ENCODE measurements at regions of chr13 and their contacts with region 1.

Region 1: DNA sequence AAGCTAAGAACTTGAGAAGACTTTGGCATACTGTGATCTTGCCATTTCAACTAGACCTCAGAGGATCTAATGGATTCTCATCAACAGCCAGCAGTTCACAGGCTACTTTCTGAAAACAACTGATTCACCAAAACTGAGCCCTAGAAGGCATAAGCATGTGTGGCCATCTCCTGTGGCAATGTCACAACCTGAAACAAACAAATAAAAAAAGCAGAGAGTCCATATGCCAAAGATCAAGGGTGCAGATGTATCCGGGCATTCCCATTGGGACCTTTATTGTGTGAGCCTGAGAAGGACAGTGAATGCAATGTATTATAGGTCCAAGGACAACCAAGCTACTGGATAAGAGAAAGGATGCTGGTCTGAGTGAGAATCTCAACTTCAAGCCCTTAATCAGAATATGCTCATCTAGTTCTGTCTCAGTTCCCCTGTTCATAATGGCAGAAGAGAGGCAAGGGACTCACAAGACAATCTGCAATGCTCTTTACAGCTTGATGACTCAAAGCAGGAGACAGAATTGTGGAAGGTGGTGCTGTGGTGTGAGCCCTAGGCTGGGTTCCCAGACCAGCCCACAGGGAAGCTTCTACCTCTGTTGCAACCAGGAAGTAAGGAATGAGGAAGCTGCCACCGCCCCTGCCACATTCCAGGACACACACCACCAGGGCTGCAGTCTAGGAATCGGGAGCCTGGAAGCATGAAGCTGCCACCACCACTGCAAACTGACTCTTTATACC is 133.7 kb downstream of the RAP2A start:
- DNase-seq: no peak
- ATAC-seq: no peak
- H3K4me3 ChIP-seq: no peak overlapping the region
- H3K27ac ChIP-seq: no peak overlapping the region
- H3K4me1 ChIP-seq: no peaks in the 10 kb centered on the region
- H3K27me3 ChIP-seq: no peaks in the 10 kb centered on the region; a peak in 1 of 5 replicates
- CTCF ChIP-seq: no peak
- EP300 ChIP-seq: no peak
- POLR2A ChIP-seq: no peak
- RAD21 ChIP-seq: no peak

Region 2: GRCh38 chr13:97004096-97004876 is 563.4 kb before region 1 on chr13:
- CTCF ChIA-PET with region 1: no interaction called
- POLR2A ChIA-PET with region 1: no interaction called
- in situ Hi-C with region 1: loop called (anchors 10 kb)
- intact Hi-C with region 1: no loop called
- DNase-seq: no peak
- ATAC-seq: no peak
- H3K4me3 ChIP-seq: no peak overlapping the region
- H3K27ac ChIP-seq: no peak overlapping the region
- H3K4me1 ChIP-seq: no peaks in the 10 kb centered on the region
- H3K27me3 ChIP-seq: no peaks in the 10 kb centered on the region
- CTCF ChIP-seq: no peak
- EP300 ChIP-seq: no peak
- POLR2A ChIP-seq: no peak
- RAD21 ChIP-seq: no peak

Region 3: DNA sequence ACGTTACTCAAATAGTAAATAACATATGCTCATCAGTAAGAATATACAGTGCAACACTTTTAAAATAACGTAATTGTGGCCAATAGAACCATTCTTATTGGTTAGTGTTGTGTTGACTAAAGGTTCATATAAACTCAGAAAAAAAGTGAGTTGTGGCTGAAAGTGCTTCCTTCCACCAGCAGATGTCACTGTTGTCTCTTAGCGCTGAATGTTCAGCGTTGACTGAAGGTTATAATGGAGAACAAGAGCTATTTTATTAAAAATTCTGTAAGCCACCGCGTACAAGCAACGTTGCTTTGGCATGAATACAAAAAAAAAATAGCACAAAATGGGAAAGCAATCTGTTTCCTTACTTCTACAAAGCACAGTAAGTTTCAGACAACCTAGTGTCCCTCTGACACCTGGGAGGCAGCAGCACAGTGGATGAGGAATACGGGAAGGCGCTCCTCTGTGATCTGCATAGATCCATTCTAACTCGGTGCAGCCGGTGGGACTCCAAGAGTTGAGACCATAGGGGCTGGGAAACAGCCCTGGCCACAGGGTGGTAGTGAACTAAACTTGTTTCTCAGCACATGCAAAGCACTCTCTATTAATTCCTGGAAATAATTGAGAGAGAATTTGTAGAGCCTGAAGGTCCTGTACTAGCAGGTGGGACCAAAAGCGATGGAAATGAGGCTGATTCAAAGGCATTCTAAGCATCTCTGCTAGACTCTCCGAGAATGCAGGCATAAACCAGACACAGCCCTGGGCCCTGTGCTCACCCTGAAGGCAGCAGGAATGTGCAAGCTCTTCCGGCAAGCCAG is 549.4 kb before region 1 on chr13:
- CTCF ChIA-PET with region 1: no interaction called
- POLR2A ChIA-PET with region 1: no interaction called
- in situ Hi-C with region 1: no loop called
- intact Hi-C with region 1: loop called (anchors 2 kb)
- DNase-seq: peak; percentile 16 to 56 (median 22)
- ATAC-seq: peak; percentile 83
- H3K4me3 ChIP-seq: no peak overlapping the region
- H3K27ac ChIP-seq: no peak overlapping the region
- H3K4me1 ChIP-seq: no peaks in the 10 kb centered on the region
- H3K27me3 ChIP-seq: no peaks in the 10 kb centered on the region; a peak in 1 of 5 replicates
- CTCF ChIP-seq: peak; percentile 57 to 78 (median 72)
- EP300 ChIP-seq: no peak
- POLR2A ChIP-seq: no peak
- RAD21 ChIP-seq: peak; percentile 54 to 72

Region 4: DNA sequence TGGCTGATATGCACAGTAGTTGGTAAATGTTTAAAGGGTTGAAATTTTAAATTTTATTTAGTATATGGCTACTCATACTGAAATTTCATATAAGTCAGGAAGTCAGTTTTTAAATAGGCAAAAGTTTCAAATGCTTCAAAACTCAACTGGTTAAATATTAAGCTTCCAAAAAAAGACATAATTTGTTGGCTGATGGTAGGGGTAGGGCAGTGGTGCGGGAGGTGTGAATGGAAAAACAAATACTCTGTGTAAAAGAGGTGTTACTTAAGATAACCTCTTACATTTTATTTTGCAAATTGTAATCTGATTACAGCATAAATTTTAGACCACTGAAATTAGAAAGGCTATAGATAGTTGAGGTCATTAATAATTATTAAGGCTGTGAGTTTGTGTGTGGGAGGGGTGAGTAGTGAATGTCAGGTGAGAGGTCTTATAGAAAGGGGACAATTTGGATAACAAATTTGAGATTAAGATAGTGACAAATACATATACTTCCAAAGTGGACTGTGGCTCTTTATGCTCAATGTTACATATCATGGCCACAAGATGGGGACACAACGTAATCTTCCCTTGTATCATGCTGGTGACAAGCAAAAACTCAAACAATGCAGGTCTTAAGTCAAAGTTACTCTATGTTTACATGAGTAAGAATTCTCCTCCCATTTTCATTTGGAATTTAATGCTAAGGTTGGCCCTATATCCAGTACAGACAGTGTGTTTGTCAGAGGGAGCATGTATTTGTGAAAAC is 536.8 kb before region 1 on chr13:
- CTCF ChIA-PET with region 1: interaction called, 3 read pairs
- POLR2A ChIA-PET with region 1: no interaction called
- in situ Hi-C with region 1: no loop called
- intact Hi-C with region 1: loop called (anchors 5 kb)
- DNase-seq: peak; percentile 7 to 35 (median 17)
- ATAC-seq: peak; percentile 82
- H3K4me3 ChIP-seq: no peak overlapping the region
- H3K27ac ChIP-seq: no peak overlapping the region
- H3K4me1 ChIP-seq: no peaks in the 10 kb centered on the region
- H3K27me3 ChIP-seq: no peaks in the 10 kb centered on the region
- CTCF ChIP-seq: peak; percentile 1 to 54 (median 28); a peak in 4 of 6 replicates
- EP300 ChIP-seq: no peak
- POLR2A ChIP-seq: no peak
- RAD21 ChIP-seq: peak in 1 of 2 experiments; percentile 65; a peak in 3 of 4 replicates

Region 5: DNA sequence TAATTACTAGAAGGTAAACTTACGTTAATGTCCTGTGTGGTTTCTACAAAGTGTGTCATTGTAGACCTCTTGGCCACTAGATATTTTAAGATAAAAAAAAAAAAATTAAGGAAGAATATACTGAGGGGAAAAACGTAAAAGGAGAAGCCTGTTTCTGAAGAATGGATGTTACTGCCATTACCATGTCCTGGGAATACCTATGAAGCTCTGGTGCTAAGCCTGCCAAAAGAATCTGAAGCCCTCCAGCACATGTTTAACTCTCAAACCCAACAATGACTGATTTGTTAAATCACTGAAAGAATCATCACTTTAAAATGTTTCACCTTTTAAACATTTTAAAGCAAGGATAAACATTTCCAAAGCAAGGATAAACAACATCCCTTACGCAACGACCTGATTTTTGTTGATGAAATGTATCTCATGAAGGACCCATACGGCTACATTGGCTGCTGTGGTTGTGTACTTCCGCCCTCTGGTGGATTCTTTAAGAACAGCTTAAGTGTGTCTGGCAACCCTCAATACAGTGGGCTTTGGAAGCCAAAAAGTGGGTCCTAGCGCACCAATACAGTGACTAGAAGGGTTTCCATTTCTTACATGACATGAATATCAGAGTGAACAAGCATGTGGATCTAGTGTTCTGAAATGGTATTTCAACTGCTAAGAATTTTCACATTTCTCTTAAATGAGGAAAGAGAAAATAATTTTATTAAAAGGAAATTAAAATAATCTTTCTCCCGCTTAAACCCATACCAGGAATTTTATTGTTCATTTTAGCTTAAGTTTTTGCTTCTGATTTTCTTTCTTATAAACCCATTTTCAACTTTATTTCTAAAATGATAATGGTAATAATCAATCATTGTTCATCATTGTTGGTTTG is 208.3 kb before region 1 on chr13:
- CTCF ChIA-PET with region 1: no interaction called
- POLR2A ChIA-PET with region 1: no interaction called
- in situ Hi-C with region 1: no loop called
- intact Hi-C with region 1: loop called (anchors 10 kb)
- DNase-seq: peak; percentile 33 to 71 (median 42)
- ATAC-seq: peak; percentile 95
- H3K4me3 ChIP-seq: no peak overlapping the region
- H3K27ac ChIP-seq: no peak overlapping the region
- H3K4me1 ChIP-seq: no peaks in the 10 kb centered on the region
- H3K27me3 ChIP-seq: no peaks in the 10 kb centered on the region
- CTCF ChIP-seq: peak; percentile 59 to 65 (median 62)
- EP300 ChIP-seq: no peak
- POLR2A ChIP-seq: no peak
- RAD21 ChIP-seq: peak; percentile 63 to 74